ENCODE measurements at regions of chr1 and their contacts with region 1.

Region 1: DNA sequence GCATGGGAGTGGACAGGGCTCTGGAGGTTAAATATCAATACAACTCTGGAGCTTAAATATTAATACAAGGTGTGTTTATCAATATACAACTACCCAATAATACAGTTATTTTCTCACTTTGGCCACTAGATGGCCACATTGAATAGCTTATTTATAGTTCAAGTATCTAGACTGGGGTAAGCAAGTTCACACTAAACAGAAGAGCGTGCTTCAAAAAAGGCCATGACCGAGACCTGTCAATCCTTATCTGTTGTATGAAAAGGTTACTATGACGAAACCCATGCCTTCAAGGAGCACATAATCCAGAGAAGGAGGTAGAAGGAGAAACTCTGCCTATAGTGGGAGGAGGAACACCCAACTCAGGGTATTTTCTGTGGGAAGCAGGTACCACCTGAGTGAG is 29.1 kb downstream of the CHML start:
- DNase-seq: peak; percentile 75
- ATAC-seq: peak; percentile 95
- H3K4me3 ChIP-seq: no peak overlapping the region
- H3K4me3 Mint-ChIP-seq: no peak overlapping the region
- H3K27ac ChIP-seq: peak overlapping the region in 1 of 2 donors; percentile 39
- H3K27ac Mint-ChIP-seq: no peak overlapping the region
- H3K4me1 ChIP-seq: peaks cover 6 to 7% of the 10 kb centered on the region in 2 donors
- H3K4me1 Mint-ChIP-seq: peaks cover 8% of the 10 kb centered on the region
- H3K27me3 ChIP-seq: no peaks in the 10 kb centered on the region
- H3K27me3 Mint-ChIP-seq: no peaks in the 10 kb centered on the region
- CTCF ChIP-seq: peak; percentile 82

Region 2: GRCh38 chr1:241276391-241276790 is 334.7 kb before region 1 on chr1:
- CTCF ChIA-PET with region 1: no interaction called
- POLR2A ChIA-PET with region 1: no interaction called
- intact Hi-C with region 1: no loop called
- DNase-seq: no peak
- ATAC-seq: no peak
- H3K4me3 ChIP-seq: no peak overlapping the region
- H3K4me3 Mint-ChIP-seq: no peak overlapping the region
- H3K27ac ChIP-seq: no peak overlapping the region
- H3K27ac Mint-ChIP-seq: no peak overlapping the region
- H3K4me1 ChIP-seq: no peaks in the 10 kb centered on the region
- H3K4me1 Mint-ChIP-seq: no peaks in the 10 kb centered on the region
- H3K27me3 ChIP-seq: no peaks in the 10 kb centered on the region
- H3K27me3 Mint-ChIP-seq: no peaks in the 10 kb centered on the region
- CTCF ChIP-seq: no peak

Region 3: DNA sequence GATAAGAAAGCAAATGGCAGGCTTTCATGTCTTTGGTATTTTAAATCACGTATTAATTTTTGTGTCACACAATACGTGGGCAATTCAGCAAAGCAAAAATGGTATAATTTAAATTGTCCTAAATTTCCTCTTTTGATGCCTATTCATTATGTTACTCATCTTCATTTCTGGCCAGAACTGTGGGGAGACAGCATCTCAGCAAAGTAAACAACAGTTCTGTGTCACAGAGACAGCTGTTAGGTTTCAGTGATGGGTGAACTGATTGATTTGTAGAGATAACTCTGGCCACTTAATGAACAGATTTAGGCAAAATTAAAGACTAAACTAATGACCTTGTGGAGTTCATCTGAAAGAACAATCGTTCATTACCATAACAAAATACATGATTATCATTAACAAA is 140.7 kb before region 1 on chr1:
- CTCF ChIA-PET with region 1: no interaction called
- POLR2A ChIA-PET with region 1: no interaction called
- intact Hi-C with region 1: no loop called
- DNase-seq: no peak
- ATAC-seq: no peak
- H3K4me3 ChIP-seq: no peak overlapping the region
- H3K4me3 Mint-ChIP-seq: no peak overlapping the region
- H3K27ac ChIP-seq: no peak overlapping the region
- H3K27ac Mint-ChIP-seq: no peak overlapping the region
- H3K4me1 ChIP-seq: no peaks in the 10 kb centered on the region
- H3K4me1 Mint-ChIP-seq: no peaks in the 10 kb centered on the region
- H3K27me3 ChIP-seq: peaks cover 0 to 6% (median 2%) of the 10 kb centered on the region in 4 experiments
- H3K27me3 Mint-ChIP-seq: peaks cover 8% of the 10 kb centered on the region
- CTCF ChIP-seq: no peak

Region 4: DNA sequence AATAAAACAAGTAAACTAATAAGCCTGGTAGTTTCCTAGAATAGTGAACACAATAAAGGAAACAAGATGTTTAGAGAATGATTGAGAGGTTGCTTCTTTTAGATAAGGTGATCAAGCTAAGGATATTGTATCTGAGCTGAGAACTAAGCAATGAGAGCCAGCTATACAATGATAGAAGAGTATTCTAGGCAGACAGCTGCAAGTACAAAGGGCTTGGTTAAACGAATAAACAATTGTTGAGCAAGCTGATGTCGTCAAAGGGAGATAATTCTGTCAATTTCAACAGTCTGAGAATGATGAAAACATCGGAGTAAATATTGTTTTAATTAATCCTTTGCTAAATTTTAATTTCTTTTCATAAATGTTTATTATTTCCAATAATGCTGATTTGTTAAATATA is 86.0 kb before region 1 on chr1:
- CTCF ChIA-PET with region 1: interaction called, 10 read pairs
- POLR2A ChIA-PET with region 1: no interaction called
- intact Hi-C with region 1: no loop called
- DNase-seq: no peak
- ATAC-seq: no peak
- H3K4me3 ChIP-seq: no peak overlapping the region
- H3K4me3 Mint-ChIP-seq: no peak overlapping the region
- H3K27ac ChIP-seq: no peak overlapping the region
- H3K27ac Mint-ChIP-seq: no peak overlapping the region
- H3K4me1 ChIP-seq: no peaks in the 10 kb centered on the region
- H3K4me1 Mint-ChIP-seq: no peaks in the 10 kb centered on the region
- H3K27me3 ChIP-seq: peaks cover 0 to 3% (median 0%) of the 10 kb centered on the region in 4 experiments
- H3K27me3 Mint-ChIP-seq: peaks cover 3% of the 10 kb centered on the region
- CTCF ChIP-seq: no peak

Region 5: GRCh38 chr1:241542199-241542910 is 68.7 kb before region 1 on chr1:
- CTCF ChIA-PET with region 1: interaction called, 10 read pairs
- POLR2A ChIA-PET with region 1: no interaction called
- intact Hi-C with region 1: no loop called
- DNase-seq: peak; percentile 48
- ATAC-seq: peak; percentile 56
- H3K4me3 ChIP-seq: no peak overlapping the region
- H3K4me3 Mint-ChIP-seq: no peak overlapping the region
- H3K27ac ChIP-seq: peak overlapping the region; percentile 21 to 77
- H3K27ac Mint-ChIP-seq: peak overlapping the region; percentile 79
- H3K4me1 ChIP-seq: peaks cover 22 to 32% of the 10 kb centered on the region in 2 donors
- H3K4me1 Mint-ChIP-seq: peaks cover 64% of the 10 kb centered on the region
- H3K27me3 ChIP-seq: no peaks in the 10 kb centered on the region
- H3K27me3 Mint-ChIP-seq: no peaks in the 10 kb centered on the region
- CTCF ChIP-seq: no peak

Region 6: DNA sequence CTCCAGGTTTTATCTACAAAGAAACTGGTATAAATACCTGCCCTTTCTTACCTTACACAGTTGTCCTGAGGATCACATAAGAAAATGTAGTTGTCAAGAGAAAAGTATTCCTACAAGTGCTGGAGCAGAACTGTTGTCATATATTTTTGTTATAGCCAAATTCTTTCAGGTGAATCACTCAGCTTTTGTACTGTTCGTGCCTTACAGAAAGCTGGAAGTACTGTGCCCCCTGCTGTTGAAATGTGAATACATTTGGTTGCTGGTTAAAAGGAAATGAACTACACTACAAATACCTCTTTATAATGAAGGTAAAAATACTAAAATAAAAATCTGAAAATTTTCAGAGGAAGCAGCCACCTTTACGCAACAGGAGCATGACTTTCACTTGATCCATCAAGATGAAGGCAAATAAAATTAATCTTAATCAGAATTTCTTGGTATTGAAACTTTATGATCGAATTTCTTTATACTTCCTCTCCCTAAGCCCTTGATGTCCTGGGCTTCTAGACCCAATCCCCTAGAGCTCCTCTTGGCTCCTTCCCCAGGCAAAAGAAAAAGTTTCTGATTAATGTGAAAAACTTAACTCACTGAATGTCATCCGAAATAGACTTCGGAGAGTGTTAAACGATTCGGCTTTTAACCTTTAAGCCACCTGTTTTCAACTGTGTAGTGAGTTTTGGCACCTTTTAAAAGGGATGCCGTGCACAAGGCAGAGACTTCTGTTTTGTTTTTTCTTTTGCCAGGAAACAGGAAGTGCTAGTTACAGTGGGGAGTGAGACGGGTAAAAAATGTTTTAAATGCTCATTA is 16.6 kb after region 1 on chr1:
- CTCF ChIA-PET with region 1: interaction called, 62 read pairs
- POLR2A ChIA-PET with region 1: no interaction called
- intact Hi-C with region 1: loop called (anchors 1 kb)
- DNase-seq: peak; percentile 78
- ATAC-seq: peak; percentile 83
- H3K4me3 ChIP-seq: peak overlapping the region in 4 of 5 experiments; percentile 6 to 41 (median 17)
- H3K4me3 Mint-ChIP-seq: peak overlapping the region; percentile 63
- H3K27ac ChIP-seq: peak overlapping the region; percentile 66 to 71
- H3K27ac Mint-ChIP-seq: peak overlapping the region; percentile 88
- H3K4me1 ChIP-seq: peaks cover 14 to 25% of the 10 kb centered on the region in 2 donors
- H3K4me1 Mint-ChIP-seq: peaks cover 42% of the 10 kb centered on the region
- H3K27me3 ChIP-seq: no peaks in the 10 kb centered on the region
- H3K27me3 Mint-ChIP-seq: no peaks in the 10 kb centered on the region
- CTCF ChIP-seq: peak; percentile 82

Region 7: GRCh38 chr1:241688940-241689368 is 77.9 kb after region 1 on chr1:
- CTCF ChIA-PET with region 1: no interaction called
- POLR2A ChIA-PET with region 1: no interaction called
- intact Hi-C with region 1: no loop called
- DNase-seq: no peak
- ATAC-seq: no peak
- H3K4me3 ChIP-seq: no peak overlapping the region
- H3K4me3 Mint-ChIP-seq: no peak overlapping the region
- H3K27ac ChIP-seq: no peak overlapping the region
- H3K27ac Mint-ChIP-seq: no peak overlapping the region
- H3K4me1 ChIP-seq: no peaks in the 10 kb centered on the region
- H3K4me1 Mint-ChIP-seq: no peaks in the 10 kb centered on the region
- H3K27me3 ChIP-seq: peaks cover 0 to 8% (median 0%) of the 10 kb centered on the region in 4 experiments
- H3K27me3 Mint-ChIP-seq: peaks cover 30% of the 10 kb centered on the region
- CTCF ChIP-seq: no peak

Region 8: GRCh38 chr1:241706954-241707365 is 95.9 kb after region 1 on chr1:
- CTCF ChIA-PET with region 1: no interaction called
- POLR2A ChIA-PET with region 1: no interaction called
- intact Hi-C with region 1: no loop called
- DNase-seq: no peak
- ATAC-seq: no peak
- H3K4me3 ChIP-seq: no peak overlapping the region
- H3K4me3 Mint-ChIP-seq: no peak overlapping the region
- H3K27ac ChIP-seq: no peak overlapping the region
- H3K27ac Mint-ChIP-seq: no peak overlapping the region
- H3K4me1 ChIP-seq: no peaks in the 10 kb centered on the region
- H3K4me1 Mint-ChIP-seq: no peaks in the 10 kb centered on the region
- H3K27me3 ChIP-seq: peaks cover 0 to 9% (median 3%) of the 10 kb centered on the region in 4 experiments
- H3K27me3 Mint-ChIP-seq: peaks cover 22% of the 10 kb centered on the region
- CTCF ChIP-seq: no peak

Region 9: GRCh38 chr1:241834733-241835377 is 223.8 kb after region 1 on chr1:
- CTCF ChIA-PET with region 1: interaction called, 11 read pairs
- POLR2A ChIA-PET with region 1: no interaction called
- intact Hi-C with region 1: no loop called
- DNase-seq: no peak
- ATAC-seq: no peak
- H3K4me3 ChIP-seq: no peak overlapping the region
- H3K4me3 Mint-ChIP-seq: no peak overlapping the region
- H3K27ac ChIP-seq: no peak overlapping the region
- H3K27ac Mint-ChIP-seq: no peak overlapping the region
- H3K4me1 ChIP-seq: peaks cover 11 to 15% of the 10 kb centered on the region in 2 donors
- H3K4me1 Mint-ChIP-seq: peaks cover 10% of the 10 kb centered on the region
- H3K27me3 ChIP-seq: no peaks in the 10 kb centered on the region
- H3K27me3 Mint-ChIP-seq: peaks cover 4% of the 10 kb centered on the region
- CTCF ChIP-seq: peak; percentile 40

Region 10: GRCh38 chr1:241895013-241895412 is 283.9 kb after region 1 on chr1:
- CTCF ChIA-PET with region 1: interaction called, 26 read pairs
- POLR2A ChIA-PET with region 1: no interaction called
- intact Hi-C with region 1: loop called (anchors 1 kb)
- DNase-seq: no peak
- ATAC-seq: no peak
- H3K4me3 ChIP-seq: no peak overlapping the region
- H3K4me3 Mint-ChIP-seq: no peak overlapping the region
- H3K27ac ChIP-seq: no peak overlapping the region
- H3K27ac Mint-ChIP-seq: no peak overlapping the region
- H3K4me1 ChIP-seq: peaks cover 12 to 15% of the 10 kb centered on the region in 2 donors
- H3K4me1 Mint-ChIP-seq: peaks cover 15% of the 10 kb centered on the region
- H3K27me3 ChIP-seq: no peaks in the 10 kb centered on the region
- H3K27me3 Mint-ChIP-seq: no peaks in the 10 kb centered on the region
- CTCF ChIP-seq: no peak

Region 11: DNA sequence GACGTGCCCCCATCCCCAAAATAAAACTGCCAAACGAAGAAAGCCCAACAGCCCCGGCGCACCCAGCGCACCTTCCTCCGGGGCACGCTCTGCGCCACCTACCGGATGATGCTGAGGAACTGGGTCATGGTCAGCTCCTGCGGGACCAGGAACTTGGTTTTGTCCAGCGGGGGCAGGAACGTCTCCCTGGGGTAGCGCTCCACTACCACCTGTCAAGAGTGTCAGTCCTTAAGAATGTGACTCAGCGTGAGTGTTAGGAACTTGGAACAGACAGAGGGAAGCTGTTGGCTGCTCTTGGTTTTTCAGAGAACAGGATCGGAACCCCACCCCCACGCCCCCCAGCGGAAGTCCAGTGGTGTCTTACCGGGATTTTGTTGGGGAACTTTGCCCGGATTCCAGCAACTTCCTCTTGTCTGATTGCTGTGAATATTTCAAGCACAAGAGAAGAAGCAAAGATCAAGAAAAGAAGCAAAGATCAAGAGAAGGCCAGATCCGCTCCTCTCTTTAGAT is 387.4 kb after region 1 on chr1:
- CTCF ChIA-PET with region 1: interaction called, 67 read pairs
- POLR2A ChIA-PET with region 1: no interaction called
- intact Hi-C with region 1: loop called (anchors 1 kb)
- DNase-seq: peak; percentile 75
- ATAC-seq: peak; percentile 85
- H3K4me3 ChIP-seq: peak overlapping the region; percentile 30 to 70 (median 50)
- H3K4me3 Mint-ChIP-seq: peak overlapping the region; percentile 85
- H3K27ac ChIP-seq: no peak overlapping the region
- H3K27ac Mint-ChIP-seq: no peak overlapping the region
- H3K4me1 ChIP-seq: peaks cover 0 to 7% of the 10 kb centered on the region in 2 donors
- H3K4me1 Mint-ChIP-seq: peaks cover 5% of the 10 kb centered on the region
- H3K27me3 ChIP-seq: peaks cover 0 to 1% (median 0%) of the 10 kb centered on the region in 4 experiments
- H3K27me3 Mint-ChIP-seq: peaks cover 2% of the 10 kb centered on the region
- CTCF ChIP-seq: peak; percentile 77

Measured in B cell (primary cell).